WTC11 (cell line): ENCODE measurements at regions of chr14 and their contacts with region 1.

Region 1: DNA sequence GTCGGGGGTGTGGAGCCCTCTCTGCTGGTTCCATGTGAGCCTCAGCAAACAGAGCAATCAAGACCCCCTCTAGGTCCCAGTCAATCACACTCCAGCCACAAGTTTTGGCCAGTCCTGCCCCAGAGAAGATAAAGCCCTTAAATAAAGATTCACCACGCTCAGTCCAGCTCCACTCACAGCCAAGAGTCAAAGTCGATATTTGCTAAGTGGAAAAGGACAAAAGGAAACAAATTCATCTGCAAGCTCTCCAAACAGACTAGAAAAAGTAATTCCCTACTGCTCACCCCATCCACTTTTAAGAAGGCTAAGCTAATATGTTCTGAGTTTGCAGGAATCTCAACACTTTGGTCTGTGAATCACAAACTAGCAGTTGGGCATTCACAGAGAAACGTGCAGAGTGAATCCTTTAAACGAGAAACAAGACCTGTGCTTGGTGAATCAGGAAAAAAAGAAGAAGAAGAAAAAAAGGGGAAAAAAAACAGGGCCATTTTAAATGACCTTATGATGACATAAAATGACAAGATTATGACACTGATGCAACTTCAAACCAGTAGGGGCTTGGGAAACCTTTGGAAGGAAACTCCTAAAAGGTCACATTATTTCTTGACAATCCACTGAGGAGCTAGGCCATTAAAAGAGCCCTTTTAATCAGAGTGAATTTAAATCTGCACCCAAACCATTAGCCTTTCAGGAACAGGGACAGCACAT is 41.8 kb upstream of the FOXN3 start:
- DNase-seq: no peak
- ATAC-seq: no peak; the same call in 1 of the 2 replicates
- H3K4me3 Mint-ChIP-seq: no peak overlapping the region
- H3K27ac Mint-ChIP-seq: peak overlapping the region; percentile 77
- H3K4me1 Mint-ChIP-seq: peaks cover 64% of the 10 kb centered on the region
- H3K27me3 Mint-ChIP-seq: no peaks in the 10 kb centered on the region
- CTCF ChIP-seq: no peak

Region 2: DNA sequence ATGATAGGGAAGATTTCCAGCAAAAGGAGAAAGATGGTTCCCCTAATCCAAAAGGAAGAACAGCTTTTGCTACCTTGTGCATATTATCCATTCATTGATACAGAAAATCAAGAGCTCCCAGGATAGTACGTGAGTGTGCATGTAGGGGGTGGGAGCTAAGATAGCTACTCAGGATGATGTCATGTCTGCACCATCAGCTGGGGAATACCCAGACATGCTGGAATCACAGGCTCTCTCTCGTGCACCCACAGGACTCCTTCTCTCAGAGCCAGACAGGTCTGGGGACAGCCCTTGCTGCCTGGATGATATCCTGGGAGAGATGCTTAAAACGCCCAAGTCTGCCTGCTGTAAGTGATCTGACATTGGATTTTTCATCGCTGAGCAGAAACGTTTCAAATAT is 80.7 kb before region 1 on chr14:
- CTCF ChIA-PET with region 1: no interaction called
- POLR2A ChIA-PET with region 1: interaction called, 12 read pairs
- DNase-seq: no peak
- ATAC-seq: no peak; the same call in 1 of the 2 replicates
- H3K4me3 Mint-ChIP-seq: no peak overlapping the region
- H3K27ac Mint-ChIP-seq: peak overlapping the region; percentile 91
- H3K4me1 Mint-ChIP-seq: peaks cover 51% of the 10 kb centered on the region
- H3K27me3 Mint-ChIP-seq: no peaks in the 10 kb centered on the region
- CTCF ChIP-seq: no peak